GM23248 (cell line): ENCODE measurements at regions of chr9 and their contacts with region 1.

Region 1: DNA sequence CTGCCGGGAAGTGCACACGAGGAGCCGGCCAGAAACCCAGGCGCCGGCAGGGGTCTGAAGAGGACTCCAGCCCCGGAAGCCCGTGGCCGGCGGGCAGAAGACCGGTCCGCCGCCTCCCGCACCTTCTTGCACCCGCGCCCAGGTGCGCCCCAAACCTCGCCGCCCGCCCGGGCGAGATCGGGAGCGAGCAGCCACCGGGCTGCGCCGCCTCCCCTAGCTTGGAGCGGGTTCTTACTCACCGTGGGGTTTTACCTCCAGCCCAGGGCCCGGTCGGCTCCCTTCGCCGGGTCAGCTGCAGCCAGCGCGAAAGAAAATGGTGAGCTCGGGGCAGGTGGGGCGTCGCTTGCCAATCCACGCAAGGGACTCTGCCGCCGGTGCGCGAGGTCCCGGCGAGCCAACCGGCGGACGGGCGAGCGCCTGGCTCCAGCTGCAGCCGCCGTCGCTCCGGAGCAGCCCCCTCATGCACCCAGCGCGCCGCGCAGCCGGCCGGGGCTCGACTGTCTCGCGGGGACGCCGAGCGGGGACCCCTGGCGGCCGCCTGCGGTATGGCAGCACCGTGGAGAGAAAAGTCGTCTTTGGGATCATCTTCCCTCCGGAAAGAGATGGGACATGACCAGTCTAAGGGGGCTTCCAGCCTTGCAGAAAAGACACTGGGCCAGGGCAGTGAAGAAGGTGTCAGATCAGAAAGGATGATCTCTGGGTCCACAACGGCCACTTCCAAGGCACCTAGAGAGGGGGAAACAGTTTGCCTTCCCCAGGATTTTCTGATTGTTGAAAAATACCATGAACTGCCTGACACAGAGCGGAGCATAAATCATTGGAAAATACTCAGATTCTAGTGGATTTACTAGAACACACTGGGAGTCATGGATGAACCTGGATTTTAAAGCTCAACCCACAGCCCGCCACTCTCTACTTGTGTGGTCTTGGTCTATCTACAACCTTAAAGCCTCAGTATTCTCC is at the start of gene MOB3B:
- DNase-seq: peak; percentile 74
- H3K4me3 ChIP-seq: peak within 1 kb of the TSS; percentile 74
- H3K27ac ChIP-seq: no peak within 1 kb of the TSS
- H3K4me1 ChIP-seq: no peaks in the 10 kb centered on the region
- H3K27me3 ChIP-seq: peaks cover 21% of the 10 kb centered on the region; the same call in 1 of the 2 replicates
- total RNA-seq, gene MOB3B: not detected in 2 replicates

Region 2: GRCh38 chr9:27303219-27303618 is 226.4 kb before region 1 on chr9:
- in situ Hi-C with region 1: no loop called
- DNase-seq: peak; percentile 27
- H3K4me3 ChIP-seq: no peak overlapping the region
- H3K27ac ChIP-seq: no peak overlapping the region
- H3K4me1 ChIP-seq: peaks cover 3% of the 10 kb centered on the region; the same call in 1 of the 2 replicates
- H3K27me3 ChIP-seq: 0 out of 2 replicates have a peak, but pooled peaks cover 3% of the 10 kb centered on the region

Region 3: GRCh38 chr9:27436234-27436633 is 93.4 kb before region 1 on chr9:
- in situ Hi-C with region 1: no loop called
- DNase-seq: no peak
- H3K4me3 ChIP-seq: no peak overlapping the region
- H3K27ac ChIP-seq: no peak overlapping the region
- H3K4me1 ChIP-seq: no peaks in the 10 kb centered on the region
- H3K27me3 ChIP-seq: no peaks in the 10 kb centered on the region

Region 4: DNA sequence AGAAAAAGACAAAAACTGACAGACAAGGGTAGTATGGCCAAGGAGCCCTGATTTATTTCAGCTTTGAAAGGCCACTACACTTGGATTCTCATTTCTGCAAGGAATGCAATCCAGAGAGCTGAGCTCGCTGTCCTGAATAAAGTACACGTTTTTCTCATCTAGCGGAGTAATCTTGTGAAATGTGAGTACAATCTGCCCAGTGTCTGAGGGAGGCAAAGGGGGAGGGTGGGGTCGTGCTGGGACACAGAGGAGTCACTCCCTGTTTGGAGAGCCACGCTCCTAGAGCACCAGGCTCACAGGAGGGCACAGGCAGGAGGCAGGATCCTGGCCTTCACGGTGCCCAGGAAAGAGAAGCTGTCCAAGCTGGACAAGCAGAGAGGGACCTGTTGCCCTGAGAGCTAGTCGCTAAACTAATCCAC is 56.5 kb before region 1 on chr9:
- in situ Hi-C with region 1: loop called (anchors 10 kb)
- DNase-seq: peak; percentile 41
- H3K4me3 ChIP-seq: no peak overlapping the region
- H3K27ac ChIP-seq: no peak overlapping the region
- H3K4me1 ChIP-seq: 0 out of 2 replicates have a peak, but pooled peaks cover 7% of the 10 kb centered on the region
- H3K27me3 ChIP-seq: no peaks in the 10 kb centered on the region; the same call in none of the 2 replicates